ENCODE measurements at regions of chr1 and their contacts with region 1.

Region 1: DNA sequence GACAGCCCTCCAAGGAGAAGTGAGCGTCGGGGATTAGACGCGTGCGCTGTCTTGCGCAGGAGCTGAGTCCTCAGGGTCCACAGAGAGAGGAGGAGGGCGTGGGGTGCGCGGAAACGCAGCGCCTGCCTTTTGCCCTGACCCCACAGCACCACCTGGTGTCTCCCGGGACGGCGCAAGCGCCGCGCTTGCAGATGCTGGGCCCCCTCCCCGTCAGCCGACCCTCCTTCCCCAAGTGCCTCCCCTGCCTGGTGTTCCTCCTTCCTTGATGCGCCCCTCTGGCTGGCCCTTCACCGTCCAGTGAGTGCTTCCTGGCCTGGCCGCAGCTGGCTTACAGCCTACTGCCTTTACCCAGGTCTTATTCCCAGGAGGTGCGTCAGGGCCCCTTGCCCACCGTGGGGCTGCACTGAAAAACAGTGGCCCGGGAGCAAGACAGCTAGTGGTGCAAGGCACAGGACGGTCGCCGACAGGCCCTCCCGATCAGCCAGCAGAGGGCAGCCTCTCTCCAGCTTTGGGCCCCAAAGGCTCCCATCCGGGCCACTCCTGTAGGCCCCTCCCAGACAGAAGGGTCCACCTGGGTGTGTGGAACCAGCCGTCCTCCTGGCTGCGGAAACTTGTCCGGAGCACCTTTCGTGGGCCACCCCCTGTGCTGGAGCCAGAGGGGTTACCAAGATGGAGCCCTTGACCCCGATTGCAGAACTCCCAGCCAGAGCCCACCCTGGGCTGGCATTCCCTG is 12.9 kb upstream of the PHLDA3 start:
- DNase-seq: peak; percentile 65 to 85 (median 72)
- H3K4me3 ChIP-seq: peak overlapping the region; percentile 49
- H3K4me3 Mint-ChIP-seq: peak overlapping the region; percentile 71 to 87 (median 76)
- H3K27ac ChIP-seq: no peak overlapping the region
- H3K27ac Mint-ChIP-seq: peak overlapping the region in 2 of 8 donors; percentile 46 to 70
- H3K4me1 ChIP-seq: peaks cover 18% of the 10 kb centered on the region
- H3K4me1 Mint-ChIP-seq: peaks cover 13 to 30% (median 29%) of the 10 kb centered on the region in 3 donors
- H3K27me3 ChIP-seq: peaks cover 6% of the 10 kb centered on the region
- H3K27me3 Mint-ChIP-seq: peaks cover 7 to 23% of the 10 kb centered on the region in 2 donors

Region 2: GRCh38 chr1:201119206-201120197 is 362.4 kb before region 1 on chr1:
- CTCF ChIA-PET with region 1: no interaction called
- POLR2A ChIA-PET with region 1: no interaction called
- DNase-seq: peak; percentile 24 to 68 (median 29)
- H3K4me3 ChIP-seq: no peak overlapping the region
- H3K4me3 Mint-ChIP-seq: no peak overlapping the region
- H3K27ac ChIP-seq: no peak overlapping the region
- H3K27ac Mint-ChIP-seq: peak overlapping the region in 1 of 8 donors; percentile 22
- H3K4me1 ChIP-seq: peaks cover 9% of the 10 kb centered on the region
- H3K4me1 Mint-ChIP-seq: peaks cover 10 to 31% (median 20%) of the 10 kb centered on the region in 3 donors
- H3K27me3 ChIP-seq: peaks cover 13% of the 10 kb centered on the region
- H3K27me3 Mint-ChIP-seq: peaks cover 7 to 19% of the 10 kb centered on the region in 2 donors

Region 3: DNA sequence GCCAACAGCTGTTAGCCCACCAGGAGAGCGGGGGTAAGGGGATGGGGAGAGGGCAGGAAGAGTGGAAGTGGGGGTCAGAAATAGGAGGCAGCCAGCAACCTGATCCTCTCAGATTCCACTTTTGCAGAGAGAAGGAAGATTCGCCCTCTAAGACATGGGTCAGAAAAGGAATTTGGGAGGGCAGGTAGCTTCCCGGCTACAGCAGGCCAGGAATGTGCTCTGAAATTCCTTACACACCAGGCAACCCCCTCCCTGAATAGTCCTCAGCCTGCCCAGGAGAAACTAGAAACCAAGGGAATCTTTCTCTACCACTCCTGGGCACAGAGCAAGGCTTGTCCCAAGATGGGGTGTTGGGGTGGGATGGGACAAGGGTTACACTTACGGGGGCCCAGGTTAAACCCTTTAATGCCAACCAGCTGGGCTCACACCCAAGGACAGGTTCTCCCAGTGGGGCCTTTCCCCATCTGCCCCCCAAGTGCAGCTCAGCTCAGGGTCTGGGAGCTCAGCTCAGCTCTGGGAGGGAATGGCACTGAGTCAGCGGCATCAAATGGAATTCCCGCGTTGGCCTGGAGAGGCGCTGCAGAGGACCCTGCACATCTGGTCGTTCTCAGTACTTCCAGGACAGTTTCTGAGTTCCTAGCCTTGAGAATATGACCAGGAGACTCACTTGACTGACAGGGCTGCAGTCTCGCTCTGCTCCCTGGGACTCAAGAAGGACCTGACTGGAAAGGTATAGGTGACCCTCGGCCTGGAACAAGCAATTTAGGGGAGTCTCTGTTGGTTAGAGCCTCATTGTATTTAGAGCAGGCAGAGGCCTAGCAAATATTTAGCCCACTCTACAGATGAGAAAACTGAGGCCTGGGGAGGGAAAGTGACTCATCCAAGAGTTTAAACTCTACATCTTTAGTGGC is 105.2 kb before region 1 on chr1:
- CTCF ChIA-PET with region 1: no interaction called
- POLR2A ChIA-PET with region 1: no interaction called
- DNase-seq: no peak
- H3K4me3 ChIP-seq: no peak overlapping the region
- H3K4me3 Mint-ChIP-seq: no peak overlapping the region
- H3K27ac ChIP-seq: no peak overlapping the region
- H3K27ac Mint-ChIP-seq: no peak overlapping the region
- H3K4me1 ChIP-seq: no peaks in the 10 kb centered on the region
- H3K4me1 Mint-ChIP-seq: no peaks in the 10 kb centered on the region
- H3K27me3 ChIP-seq: peaks cover 5% of the 10 kb centered on the region
- H3K27me3 Mint-ChIP-seq: peaks cover 4 to 28% of the 10 kb centered on the region in 2 donors

Region 4: GRCh38 chr1:201447911-201448871 is 33.7 kb before region 1 on chr1:
- CTCF ChIA-PET with region 1: interaction called, 22 read pairs
- POLR2A ChIA-PET with region 1: no interaction called
- DNase-seq: peak; percentile 15 to 64 (median 28)
- H3K4me3 ChIP-seq: no peak overlapping the region
- H3K4me3 Mint-ChIP-seq: no peak overlapping the region
- H3K27ac ChIP-seq: no peak overlapping the region
- H3K27ac Mint-ChIP-seq: no peak overlapping the region
- H3K4me1 ChIP-seq: peaks cover 8% of the 10 kb centered on the region
- H3K4me1 Mint-ChIP-seq: peaks cover 0 to 6% (median 3%) of the 10 kb centered on the region in 3 donors
- H3K27me3 ChIP-seq: no peaks in the 10 kb centered on the region
- H3K27me3 Mint-ChIP-seq: peaks cover 6 to 31% of the 10 kb centered on the region in 2 donors

Region 5: DNA sequence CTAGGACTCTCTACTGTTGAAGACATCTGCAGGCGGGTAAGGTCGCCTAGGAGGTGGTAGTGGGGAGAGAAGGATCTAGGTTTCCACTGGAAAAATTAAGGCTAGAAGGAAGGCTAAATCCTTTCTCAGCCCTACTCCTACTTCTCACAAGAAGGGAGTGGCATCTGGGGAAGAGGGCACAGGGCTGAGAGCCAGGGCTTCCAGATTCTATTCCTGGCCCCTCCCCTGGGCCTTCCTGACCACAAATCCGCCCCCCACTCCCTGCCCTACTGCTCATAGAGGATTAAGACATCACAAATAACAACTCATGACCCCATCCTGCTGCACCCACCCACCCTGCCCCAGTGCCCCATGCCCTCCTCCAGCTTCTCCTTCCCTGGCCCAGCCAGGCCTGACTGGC is 15.4 kb before region 1 on chr1:
- CTCF ChIA-PET with region 1: interaction called, 11 read pairs
- POLR2A ChIA-PET with region 1: no interaction called
- DNase-seq: no peak
- H3K4me3 ChIP-seq: no peak overlapping the region
- H3K4me3 Mint-ChIP-seq: peak overlapping the region in 1 of 7 donors; percentile 24
- H3K27ac ChIP-seq: no peak overlapping the region
- H3K27ac Mint-ChIP-seq: no peak overlapping the region
- H3K4me1 ChIP-seq: no peaks in the 10 kb centered on the region
- H3K4me1 Mint-ChIP-seq: peaks cover 5 to 10% (median 6%) of the 10 kb centered on the region in 3 donors
- H3K27me3 ChIP-seq: peaks cover 9% of the 10 kb centered on the region
- H3K27me3 Mint-ChIP-seq: peaks cover 21 to 48% of the 10 kb centered on the region in 2 donors

Region 6: DNA sequence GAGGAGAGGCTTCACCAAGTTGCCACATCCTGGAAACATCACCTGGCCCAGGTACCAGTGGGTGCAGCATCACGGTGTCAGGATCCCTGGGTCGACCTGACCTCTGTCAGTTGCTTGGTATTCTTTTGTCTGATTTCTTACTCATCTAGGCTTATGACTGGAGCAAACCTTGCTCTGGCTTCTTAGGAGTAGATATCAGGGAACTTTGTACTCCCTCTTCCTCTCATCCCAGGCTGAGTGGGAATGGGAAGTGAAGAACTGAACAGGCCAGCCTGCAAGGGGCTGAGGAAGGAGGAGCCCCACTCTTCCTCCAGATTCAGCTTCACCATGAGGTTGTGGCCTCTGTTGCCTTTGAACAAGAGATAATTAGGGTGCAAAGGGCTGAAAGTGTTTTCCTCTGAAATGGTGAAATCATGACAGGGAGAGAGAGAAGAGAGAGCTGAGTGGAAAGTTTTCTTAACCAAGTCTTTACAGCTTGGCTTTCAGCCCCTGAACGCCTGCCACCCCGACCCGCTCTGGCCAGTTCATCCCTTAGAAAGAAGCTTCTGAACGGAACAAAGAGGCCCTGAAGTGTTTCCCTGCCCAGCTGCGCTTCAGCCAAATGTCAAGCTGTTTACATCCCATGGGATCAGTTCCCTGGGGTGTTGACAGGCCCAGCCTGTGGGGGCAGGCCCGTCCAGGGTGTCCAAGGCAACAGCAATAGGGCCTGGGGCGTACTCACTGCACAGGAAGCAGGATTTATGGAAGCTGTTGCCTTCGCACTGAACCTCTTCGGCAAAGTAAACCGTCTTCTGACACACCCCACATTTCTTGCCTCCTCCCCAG is 13.8 kb after region 1 on chr1:
- CTCF ChIA-PET with region 1: interaction called, 406 read pairs
- POLR2A ChIA-PET with region 1: no interaction called
- DNase-seq: no peak
- H3K4me3 ChIP-seq: no peak overlapping the region
- H3K4me3 Mint-ChIP-seq: no peak overlapping the region
- H3K27ac ChIP-seq: no peak overlapping the region
- H3K27ac Mint-ChIP-seq: peak overlapping the region in 1 of 8 donors; percentile 54
- H3K4me1 ChIP-seq: no peaks in the 10 kb centered on the region
- H3K4me1 Mint-ChIP-seq: peaks cover 0 to 14% (median 4%) of the 10 kb centered on the region in 3 donors
- H3K27me3 ChIP-seq: no peaks in the 10 kb centered on the region
- H3K27me3 Mint-ChIP-seq: peaks cover 0 to 2% of the 10 kb centered on the region in 2 donors

Region 7: DNA sequence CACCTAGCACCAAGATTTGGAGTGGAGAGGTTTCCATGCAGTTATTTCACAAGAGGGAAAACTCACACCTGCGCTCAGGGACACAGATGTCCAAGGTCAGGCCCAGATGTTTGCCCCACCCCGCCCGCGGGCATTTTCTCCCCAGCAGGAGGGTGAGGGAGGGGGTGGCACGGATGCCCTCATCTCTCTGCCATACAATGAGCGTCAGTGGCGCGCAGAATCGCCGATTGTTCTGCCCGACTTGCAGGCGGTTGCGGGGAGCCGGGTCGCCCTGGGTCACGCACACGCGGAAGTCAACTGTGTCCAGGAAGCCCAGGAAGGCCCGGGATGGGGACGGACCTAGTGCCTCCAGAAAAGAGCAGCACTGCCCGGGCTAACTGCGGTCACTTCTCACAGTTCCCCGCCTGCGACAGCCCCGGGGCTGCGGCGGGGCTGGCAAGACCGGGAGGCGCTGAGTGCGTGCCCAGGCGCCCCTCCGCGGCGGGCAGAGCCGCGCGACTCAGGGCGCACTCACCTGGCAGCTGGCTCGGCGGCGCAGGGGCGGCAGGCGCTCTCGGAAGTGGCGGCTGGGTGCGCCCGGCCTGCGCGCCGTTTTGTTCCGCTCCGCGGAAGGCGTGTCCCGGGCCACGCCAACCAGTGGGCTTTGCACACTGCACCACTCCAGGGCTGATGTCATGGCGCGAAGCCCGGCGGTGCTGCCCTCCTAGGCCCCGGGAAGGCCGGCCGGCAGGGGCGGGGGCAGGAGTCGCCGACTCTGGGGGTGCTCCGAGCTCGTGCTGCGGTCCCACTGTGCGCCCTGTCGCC is 24.8 kb after region 1 on chr1 and contains the start of gene CSRP1:
- CTCF ChIA-PET with region 1: interaction called, 406 read pairs
- POLR2A ChIA-PET with region 1: interaction called, 14 read pairs
- DNase-seq: peak; percentile 62 to 88 (median 77)
- H3K4me3 ChIP-seq: peak within 1 kb of the TSS; percentile 76
- H3K4me3 Mint-ChIP-seq: peak within 1 kb of the TSS; percentile 83 to 94 (median 87)
- H3K27ac ChIP-seq: peak within 1 kb of the TSS; percentile 78
- H3K27ac Mint-ChIP-seq: peak within 1 kb of the TSS; percentile 84 to 95 (median 92)
- H3K4me1 ChIP-seq: peaks cover 25% of the 10 kb centered on the region
- H3K4me1 Mint-ChIP-seq: peaks cover 35 to 50% (median 46%) of the 10 kb centered on the region in 3 donors
- H3K27me3 ChIP-seq: no peaks in the 10 kb centered on the region
- H3K27me3 Mint-ChIP-seq: no peaks in the 10 kb centered on the region
- total RNA-seq, gene CSRP1: 66.9 to 67.6 TPM

Region 8: DNA sequence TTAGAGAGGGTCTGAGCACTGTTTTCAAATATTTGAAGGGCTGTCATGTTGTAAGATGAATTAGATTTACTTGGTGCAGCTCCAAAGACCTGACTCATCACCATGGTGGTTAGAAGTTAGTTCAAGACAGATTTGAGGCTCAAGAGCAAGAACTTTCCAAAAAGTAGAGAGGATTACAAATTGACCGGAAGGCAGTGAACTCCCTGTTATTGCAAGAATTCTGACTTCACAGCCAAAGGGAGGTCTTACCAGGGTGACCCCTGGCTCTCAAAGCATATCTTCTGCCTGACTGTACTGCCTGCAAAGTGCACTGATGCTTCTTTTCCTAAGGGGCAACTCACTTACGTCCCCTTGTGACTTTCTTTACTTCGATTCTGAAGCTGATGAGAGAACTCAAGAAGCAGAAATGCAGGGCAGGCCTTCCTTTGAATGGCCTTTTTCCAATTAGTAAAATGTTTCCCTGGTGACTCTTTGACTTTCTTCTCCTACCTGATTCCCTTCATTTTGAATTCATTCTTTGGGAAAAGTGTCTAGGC is 143.4 kb after region 1 on chr1:
- CTCF ChIA-PET with region 1: no interaction called
- POLR2A ChIA-PET with region 1: no interaction called
- DNase-seq: no peak
- H3K4me3 ChIP-seq: no peak overlapping the region
- H3K4me3 Mint-ChIP-seq: no peak overlapping the region
- H3K27ac ChIP-seq: no peak overlapping the region
- H3K27ac Mint-ChIP-seq: no peak overlapping the region
- H3K4me1 ChIP-seq: no peaks in the 10 kb centered on the region
- H3K4me1 Mint-ChIP-seq: no peaks in the 10 kb centered on the region
- H3K27me3 ChIP-seq: no peaks in the 10 kb centered on the region
- H3K27me3 Mint-ChIP-seq: peaks cover 0 to 5% of the 10 kb centered on the region in 2 donors

Region 9: GRCh38 chr1:201732351-201732750 is 250.4 kb after region 1 on chr1:
- CTCF ChIA-PET with region 1: no interaction called
- POLR2A ChIA-PET with region 1: no interaction called
- DNase-seq: no peak
- H3K4me3 ChIP-seq: no peak overlapping the region
- H3K4me3 Mint-ChIP-seq: no peak overlapping the region
- H3K27ac ChIP-seq: no peak overlapping the region
- H3K27ac Mint-ChIP-seq: peak overlapping the region in 1 of 8 donors; percentile 16
- H3K4me1 ChIP-seq: no peaks in the 10 kb centered on the region
- H3K4me1 Mint-ChIP-seq: no peaks in the 10 kb centered on the region
- H3K27me3 ChIP-seq: no peaks in the 10 kb centered on the region
- H3K27me3 Mint-ChIP-seq: peaks cover 13 to 25% of the 10 kb centered on the region in 2 donors